HEK293T (cell line): ENCODE measurements at regions of chr6 and their contacts with region 1.

Region 1: DNA sequence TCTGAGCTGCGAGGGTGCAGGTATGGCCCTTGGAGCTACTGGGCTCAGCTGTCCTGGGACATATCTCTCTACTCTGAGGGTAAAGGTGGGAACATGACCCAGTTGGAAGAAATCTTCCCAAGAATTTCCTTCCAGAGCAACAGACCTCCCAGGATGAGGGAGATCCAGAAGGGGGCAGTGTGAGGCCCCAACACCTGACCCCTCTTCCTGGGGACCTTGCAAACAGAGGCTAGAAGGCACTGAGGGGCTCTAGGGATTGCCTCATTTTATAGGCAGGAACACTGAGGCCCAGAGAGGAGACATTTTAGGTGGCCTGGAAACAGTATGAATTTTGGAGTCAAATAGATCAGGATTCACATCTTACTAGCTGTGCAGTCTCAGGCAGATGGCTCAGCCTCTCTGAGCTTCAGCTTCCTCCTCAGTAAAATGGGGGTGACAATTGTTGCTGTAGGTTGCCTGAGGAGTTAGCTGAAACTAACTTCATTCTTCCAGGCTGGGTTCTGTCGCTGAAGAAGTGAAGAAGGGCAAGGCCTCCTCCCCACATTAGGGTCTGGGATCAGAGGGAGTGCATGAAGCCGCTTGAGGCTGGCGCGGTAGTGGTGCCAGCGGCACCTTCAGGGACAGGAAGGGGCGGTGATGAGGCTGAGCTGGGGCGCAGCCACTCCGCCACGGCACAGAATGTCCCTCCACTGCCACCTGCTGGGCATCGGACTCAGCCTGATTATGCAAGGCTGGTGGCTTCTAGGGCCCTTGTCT is 11.4 kb downstream of the KCNK17 start:
- DNase-seq: peak; percentile 89

Region 2: GRCh38 chr6:38290133-38290799 is 1012.6 kb before region 1 on chr6:
- CTCF ChIA-PET with region 1: no interaction called
- POLR2A ChIA-PET with region 1: no interaction called
- DNase-seq: no peak

Region 3: GRCh38 chr6:38997128-38997761 is 305.6 kb before region 1 on chr6:
- CTCF ChIA-PET with region 1: interaction called, 16 read pairs
- POLR2A ChIA-PET with region 1: no interaction called
- DNase-seq: peak; percentile 71

Region 4: DNA sequence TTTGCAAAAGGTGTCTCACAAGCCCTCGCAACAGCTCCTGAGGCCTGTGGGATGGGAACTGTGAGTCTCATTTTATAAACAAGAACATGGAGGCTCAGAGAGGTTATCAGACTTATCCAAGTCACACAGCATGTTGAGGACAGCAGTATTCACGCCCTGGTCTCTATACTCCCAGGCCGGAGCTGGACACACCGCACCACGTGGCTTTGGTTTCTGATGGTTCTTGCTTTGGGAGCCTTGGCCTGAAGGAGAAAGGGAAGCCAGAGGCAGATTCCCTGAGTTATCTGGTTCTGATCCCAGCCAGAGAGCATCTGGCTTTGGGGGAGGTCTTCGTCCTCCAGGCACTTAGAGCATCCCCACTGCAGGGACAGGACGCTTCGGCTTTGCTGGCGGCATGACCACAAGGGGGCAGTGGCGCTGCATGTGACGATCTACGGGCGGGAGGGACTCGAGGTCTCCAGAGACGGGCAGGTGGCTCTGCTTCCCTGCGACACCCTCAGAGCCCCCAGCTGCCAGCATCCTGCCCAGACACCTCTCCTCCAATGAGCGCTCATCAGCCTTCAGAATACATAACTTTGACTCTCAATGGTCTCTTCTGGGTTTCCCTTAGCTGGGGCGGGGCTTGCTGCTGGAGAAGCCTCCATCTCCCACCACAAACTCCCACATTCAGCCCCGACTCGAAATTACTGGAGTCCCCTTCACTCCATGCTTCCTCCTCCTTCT is 136.5 kb before region 1 on chr6:
- CTCF ChIA-PET with region 1: interaction called, 83 read pairs
- POLR2A ChIA-PET with region 1: interaction called, 3 read pairs
- DNase-seq: peak; percentile 89

Region 5: GRCh38 chr6:39543095-39543494 is 240.2 kb after region 1 on chr6:
- CTCF ChIA-PET with region 1: no interaction called
- POLR2A ChIA-PET with region 1: no interaction called
- DNase-seq: no peak